H1 (cell line): ENCODE measurements at regions of chr17 and their contacts with region 1.

Region 1: DNA sequence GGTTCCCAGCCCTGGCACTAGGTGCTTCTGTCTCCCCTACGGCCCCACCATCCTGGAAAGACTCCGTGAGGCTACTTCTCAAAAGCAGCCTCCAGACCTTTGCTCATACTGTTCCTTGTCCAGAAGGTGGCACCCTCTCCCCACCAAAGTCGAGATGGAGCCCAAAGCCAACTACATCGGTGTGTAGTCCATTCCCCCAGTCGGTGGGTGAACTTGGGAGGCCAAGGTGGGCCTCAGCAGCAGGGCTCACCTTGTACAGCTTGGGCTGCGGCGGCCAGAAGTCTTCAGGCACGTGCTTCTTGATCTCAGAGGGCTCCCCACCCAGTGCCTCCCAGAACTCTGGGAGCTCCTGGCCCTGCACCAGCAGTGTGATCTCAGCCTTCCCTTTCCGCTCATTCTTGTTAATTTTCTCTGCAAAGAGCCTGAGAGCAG is 10.2 kb downstream of the FLII start:
- DNase-seq: peak in 1 of 2 experiments; percentile 76
- H3K4me3 ChIP-seq: no peak overlapping the region
- H3K27ac ChIP-seq: no peak overlapping the region
- H3K4me1 ChIP-seq: peaks cover 0 to 16% (median 9%) of the 10 kb centered on the region in 4 experiments; a peak in 6 of 7 replicates
- H3K27me3 ChIP-seq: no peaks in the 10 kb centered on the region
- CTCF ChIP-seq: peak; percentile 73 to 84 (median 73)
- EP300 ChIP-seq: no peak
- POLR2A ChIP-seq: no peak
- RAD21 ChIP-seq: peak; percentile 85 to 90

Region 2: DNA sequence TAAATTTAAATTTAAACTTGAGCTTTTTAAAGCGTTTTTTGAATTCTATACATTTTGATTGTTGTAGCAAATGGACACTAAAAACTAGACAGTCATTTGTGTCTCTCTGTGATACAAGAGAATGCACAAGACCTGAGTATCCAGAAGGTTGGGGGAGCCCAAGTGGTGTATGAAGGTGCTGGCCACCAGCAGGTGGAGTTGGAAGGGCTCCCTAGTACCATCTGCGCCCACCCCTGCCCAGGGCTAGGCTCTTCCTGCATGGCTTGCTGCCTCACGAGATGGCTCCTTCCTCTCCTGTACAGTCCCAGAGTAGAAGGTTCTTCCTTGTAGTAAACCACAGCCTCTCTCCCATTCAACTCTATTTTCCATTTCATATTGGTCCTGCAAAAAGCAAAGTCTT is 192.1 kb before region 1 on chr17:
- CTCF ChIA-PET with region 1: no interaction called
- POLR2A ChIA-PET with region 1: no interaction called
- DNase-seq: no peak
- H3K4me3 ChIP-seq: no peak overlapping the region
- H3K27ac ChIP-seq: no peak overlapping the region
- H3K4me1 ChIP-seq: no peaks in the 10 kb centered on the region
- H3K27me3 ChIP-seq: no peaks in the 10 kb centered on the region
- CTCF ChIP-seq: peak in 1 of 3 experiments; percentile 13; a peak in 1 of 4 replicates
- EP300 ChIP-seq: no peak
- POLR2A ChIP-seq: no peak
- RAD21 ChIP-seq: no peak

Region 3: GRCh38 chr17:18132711-18133110 is 115.6 kb before region 1 on chr17:
- CTCF ChIA-PET with region 1: no interaction called
- POLR2A ChIA-PET with region 1: no interaction called
- DNase-seq: no peak
- H3K4me3 ChIP-seq: no peak overlapping the region
- H3K27ac ChIP-seq: no peak overlapping the region
- H3K4me1 ChIP-seq: no peaks in the 10 kb centered on the region; a peak in 2 of 7 replicates
- H3K27me3 ChIP-seq: peaks cover 0 to 3% (median 2%) of the 10 kb centered on the region in 4 experiments; a peak in 4 of 7 replicates
- CTCF ChIP-seq: no peak
- EP300 ChIP-seq: no peak
- POLR2A ChIP-seq: no peak
- RAD21 ChIP-seq: no peak

Region 4: GRCh38 chr17:18194811-18195210 is 53.5 kb before region 1 on chr17:
- CTCF ChIA-PET with region 1: no interaction called
- POLR2A ChIA-PET with region 1: no interaction called
- DNase-seq: no peak
- H3K4me3 ChIP-seq: no peak overlapping the region
- H3K27ac ChIP-seq: no peak overlapping the region
- H3K4me1 ChIP-seq: no peaks in the 10 kb centered on the region
- H3K27me3 ChIP-seq: no peaks in the 10 kb centered on the region
- CTCF ChIP-seq: no peak
- EP300 ChIP-seq: no peak
- POLR2A ChIP-seq: no peak
- RAD21 ChIP-seq: no peak

Region 5: DNA sequence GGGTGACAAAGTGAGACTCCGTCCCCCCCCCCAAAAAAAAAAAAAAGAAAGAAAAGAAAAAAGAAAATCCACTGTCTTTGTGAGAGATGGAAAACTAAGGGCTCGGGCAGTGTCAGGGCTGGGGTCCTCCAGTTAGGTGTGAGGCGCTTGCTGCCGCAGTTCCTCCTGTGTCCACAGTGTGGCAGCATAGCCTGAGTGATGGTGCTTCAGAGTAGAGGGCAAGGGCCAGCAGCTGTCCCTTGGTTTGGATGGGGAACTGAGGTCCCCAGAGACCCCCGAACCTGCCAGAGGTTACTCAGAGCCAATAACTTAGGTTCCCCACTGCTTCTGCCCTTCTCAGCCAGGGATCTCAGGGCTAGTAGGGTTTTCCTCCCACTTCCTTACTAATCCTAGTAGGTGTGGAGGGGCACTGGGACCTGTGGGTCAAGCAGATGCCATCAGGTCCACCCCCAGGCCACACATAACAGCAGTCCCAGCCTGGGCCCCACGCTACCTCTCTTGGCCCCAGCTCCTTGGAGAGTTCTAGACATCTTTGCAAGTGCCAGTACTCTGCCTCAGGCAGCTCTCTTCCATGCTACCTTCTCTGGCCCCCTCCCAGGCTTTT is 30.8 kb before region 1 on chr17:
- CTCF ChIA-PET with region 1: interaction called, 25 read pairs
- POLR2A ChIA-PET with region 1: interaction called, 5 read pairs
- DNase-seq: peak in 1 of 2 experiments; percentile 96
- H3K4me3 ChIP-seq: no peak overlapping the region
- H3K27ac ChIP-seq: no peak overlapping the region
- H3K4me1 ChIP-seq: no peaks in the 10 kb centered on the region; a peak in 3 of 7 replicates
- H3K27me3 ChIP-seq: no peaks in the 10 kb centered on the region
- CTCF ChIP-seq: peak; percentile 92 to 99 (median 98)
- EP300 ChIP-seq: no peak
- POLR2A ChIP-seq: no peak
- RAD21 ChIP-seq: peak; percentile 94 to 95

Region 6: DNA sequence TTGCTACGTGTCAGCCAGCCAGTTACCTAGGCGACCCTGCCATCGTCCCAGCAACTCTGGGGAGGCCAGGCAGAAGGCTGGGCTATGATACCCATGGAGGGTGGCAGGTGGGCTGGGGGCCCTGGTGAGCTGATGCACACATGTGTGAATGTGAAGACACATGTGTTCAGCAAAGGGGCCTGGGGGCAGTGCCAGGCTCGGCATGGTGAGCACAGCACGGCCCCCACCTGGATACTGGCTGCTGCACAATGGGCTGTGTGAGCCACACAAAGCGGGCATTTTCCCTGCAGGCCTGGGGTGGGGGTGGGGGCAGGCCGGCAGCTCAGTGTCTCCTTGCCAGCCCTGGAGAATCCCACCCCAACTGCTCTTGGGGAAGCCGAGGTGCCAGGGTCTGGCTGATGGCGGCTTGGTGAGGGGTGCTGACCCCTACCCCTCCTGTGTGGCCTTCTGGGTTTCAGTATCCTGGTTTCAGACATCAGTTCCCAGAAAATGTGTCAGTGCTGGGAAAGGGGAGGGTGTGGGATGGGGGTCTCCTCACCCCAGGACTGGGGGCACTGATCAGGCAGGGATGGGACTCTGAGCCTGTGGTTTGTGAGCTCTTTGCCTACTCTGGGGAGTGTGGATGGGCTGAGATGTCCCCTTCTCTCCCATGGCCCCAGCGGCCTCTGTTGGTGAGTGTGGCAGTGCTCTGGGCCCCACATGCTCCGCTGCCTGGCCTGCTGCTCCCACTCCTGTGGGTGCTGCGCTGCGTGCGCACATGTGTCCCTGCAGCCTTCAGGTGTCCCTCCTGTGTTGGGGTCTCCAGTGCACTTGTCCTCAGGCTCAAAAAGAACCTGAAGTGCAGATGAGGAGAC is 17.8 kb before region 1 on chr17:
- CTCF ChIA-PET with region 1: interaction called, 5 read pairs
- POLR2A ChIA-PET with region 1: interaction called, 14 read pairs
- DNase-seq: no peak
- H3K4me3 ChIP-seq: no peak overlapping the region
- H3K27ac ChIP-seq: no peak overlapping the region
- H3K4me1 ChIP-seq: peaks cover 0 to 10% (median 6%) of the 10 kb centered on the region in 4 experiments; a peak in 4 of 7 replicates
- H3K27me3 ChIP-seq: no peaks in the 10 kb centered on the region
- CTCF ChIP-seq: no peak
- EP300 ChIP-seq: no peak
- POLR2A ChIP-seq: no peak
- RAD21 ChIP-seq: no peak

Region 7: DNA sequence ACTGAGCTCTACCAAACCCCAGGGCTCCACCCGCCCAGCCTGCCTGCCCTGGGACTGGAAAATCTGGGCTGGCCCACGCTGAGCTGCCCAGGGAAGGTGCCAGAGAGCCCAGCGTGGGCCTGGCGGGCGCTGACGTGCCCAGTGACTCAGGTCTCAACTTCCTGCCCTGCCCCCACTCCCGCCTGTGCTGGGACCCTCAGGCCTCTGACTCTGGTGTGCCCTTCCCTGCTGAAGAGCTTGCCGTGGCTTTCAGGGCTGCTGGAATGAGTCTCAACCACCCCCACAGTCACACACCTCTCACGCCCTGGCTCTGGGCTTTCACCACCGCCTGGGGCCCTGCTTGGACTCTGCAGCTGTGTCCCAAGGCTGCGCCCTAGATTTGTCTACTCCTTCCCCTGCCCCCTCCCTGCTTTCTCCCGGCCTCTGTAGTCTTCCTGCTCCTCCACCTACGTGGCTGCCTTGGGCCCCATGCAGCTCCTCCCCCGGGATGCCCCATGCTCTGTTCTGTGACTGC is 12.5 kb before region 1 on chr17:
- CTCF ChIA-PET with region 1: interaction called, 6 read pairs
- POLR2A ChIA-PET with region 1: interaction called, 11 read pairs
- DNase-seq: no peak
- H3K4me3 ChIP-seq: no peak overlapping the region
- H3K27ac ChIP-seq: no peak overlapping the region
- H3K4me1 ChIP-seq: peaks cover 0 to 4% (median 0%) of the 10 kb centered on the region in 4 experiments; a peak in 1 of 7 replicates
- H3K27me3 ChIP-seq: peaks cover 0 to 2% (median 0%) of the 10 kb centered on the region in 4 experiments; a peak in 1 of 7 replicates
- CTCF ChIP-seq: no peak
- EP300 ChIP-seq: no peak
- POLR2A ChIP-seq: no peak
- RAD21 ChIP-seq: no peak

Region 8: GRCh38 chr17:18260332-18261144 is 12.2 kb after region 1 on chr17 and contains the start of gene MIEF2:
- CTCF ChIA-PET with region 1: interaction called, 30 read pairs
- POLR2A ChIA-PET with region 1: interaction called, 171 read pairs
- DNase-seq: peak; percentile 91 to 94
- H3K4me3 ChIP-seq: peak within 1 kb of the TSS; percentile 76 to 88 (median 84)
- H3K27ac ChIP-seq: peak within 1 kb of the TSS; percentile 90; the same call in 1 of the 2 replicates
- H3K4me1 ChIP-seq: peaks cover 4 to 37% (median 20%) of the 10 kb centered on the region in 4 experiments
- H3K27me3 ChIP-seq: no peaks in the 10 kb centered on the region
- CTCF ChIP-seq: no peak
- EP300 ChIP-seq: peak in 1 of 2 experiments; percentile 23; a peak in 1 of 3 replicates
- POLR2A ChIP-seq: peak in 1 of 2 experiments; percentile 91; a peak in 2 of 3 replicates
- RAD21 ChIP-seq: no peak
- total RNA-seq, gene MIEF2: 9.9 and 12.4 TPM in 2 replicates

Region 9: DNA sequence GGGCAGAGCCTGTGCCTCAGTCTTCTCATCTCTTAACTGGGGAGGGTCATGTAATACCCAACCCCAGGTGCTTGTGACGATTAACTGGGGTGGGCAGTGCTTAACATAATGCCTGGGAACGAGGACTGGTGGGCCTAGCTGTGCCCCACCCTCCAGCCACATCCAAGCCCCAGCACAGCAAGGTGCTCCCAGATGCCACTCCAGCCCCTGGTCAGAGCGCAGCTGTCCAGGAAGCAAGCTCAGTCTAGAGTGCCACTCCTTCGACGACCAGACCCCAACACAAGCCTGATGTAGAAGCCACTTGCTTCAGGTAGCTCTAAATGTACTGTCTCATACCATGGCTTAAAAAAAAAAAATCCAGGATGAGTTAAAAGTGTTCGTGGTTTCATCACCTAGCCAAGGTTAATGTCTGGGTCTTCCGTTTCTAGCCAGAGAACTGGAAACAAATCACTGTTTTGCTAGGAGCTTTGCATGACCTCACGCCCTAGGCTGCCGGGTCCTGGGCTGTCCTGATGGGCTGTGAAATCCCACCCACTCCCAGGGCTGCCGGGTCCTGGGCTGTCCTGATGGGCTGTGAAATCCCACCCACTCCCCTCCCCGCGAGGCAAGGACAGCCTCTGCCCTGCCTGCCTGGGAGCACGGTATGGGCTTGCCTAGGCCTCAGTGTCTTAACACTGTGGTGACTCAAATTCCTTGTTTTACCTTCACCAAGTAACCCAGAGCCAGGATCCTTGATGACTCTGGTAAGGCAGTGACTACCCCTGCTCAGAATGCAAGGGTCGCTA is 19.8 kb after region 1 on chr17:
- CTCF ChIA-PET with region 1: interaction called, 30 read pairs
- POLR2A ChIA-PET with region 1: interaction called, 171 read pairs
- DNase-seq: no peak
- H3K4me3 ChIP-seq: no peak overlapping the region
- H3K27ac ChIP-seq: no peak overlapping the region
- H3K4me1 ChIP-seq: peaks cover 0 to 10% (median 2%) of the 10 kb centered on the region in 4 experiments; a peak in 4 of 7 replicates
- H3K27me3 ChIP-seq: no peaks in the 10 kb centered on the region
- CTCF ChIP-seq: no peak
- EP300 ChIP-seq: no peak
- POLR2A ChIP-seq: no peak; a peak in 1 of 3 replicates
- RAD21 ChIP-seq: no peak

Region 10: DNA sequence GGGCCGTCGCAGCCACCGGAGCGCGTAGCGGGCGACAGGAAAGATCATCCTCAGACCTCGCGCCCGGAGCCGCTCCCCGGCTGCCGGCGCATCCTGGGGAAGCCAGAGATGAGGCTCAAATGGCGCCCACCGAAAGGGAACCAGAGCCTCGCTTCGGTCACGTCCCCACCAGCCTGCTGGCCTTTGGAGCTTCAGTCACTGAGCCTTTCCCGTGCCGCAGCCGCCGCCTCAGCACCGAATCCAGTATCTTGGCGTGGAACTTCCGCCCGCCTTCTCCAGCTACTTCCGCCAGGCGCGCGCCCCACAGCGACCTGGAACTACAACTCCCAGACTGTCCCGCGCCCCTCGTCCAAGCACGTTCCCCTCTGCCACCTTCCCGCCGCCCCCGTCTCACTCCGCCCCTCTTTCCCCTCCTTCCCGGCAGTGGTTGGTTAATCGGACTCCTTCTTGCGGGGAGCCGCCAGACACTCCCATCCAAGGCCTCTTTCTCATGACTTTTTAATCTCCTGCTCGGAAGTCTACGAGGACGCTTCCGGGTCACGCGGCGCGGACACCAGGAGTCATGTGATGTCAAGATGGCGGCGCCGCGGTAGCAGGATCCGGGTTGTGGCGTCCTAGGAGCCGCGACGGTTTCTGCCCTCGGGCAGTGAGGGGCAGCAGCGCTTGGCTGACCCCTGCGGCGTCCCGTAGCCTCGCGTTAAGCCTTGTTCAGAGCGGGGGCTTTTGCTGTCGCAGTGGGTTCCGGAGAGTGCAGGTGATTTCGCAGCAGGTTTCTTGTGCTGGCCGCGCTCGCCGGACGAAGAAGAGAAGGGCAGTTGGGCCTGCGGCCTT is 66.6 kb after region 1 on chr17 and contains the starts of genes SMCR8 and TOP3A:
- CTCF ChIA-PET with region 1: interaction called, 19 read pairs
- POLR2A ChIA-PET with region 1: interaction called, 9 read pairs
- DNase-seq: peak; percentile 85 to 93
- H3K4me3 ChIP-seq: peak within 1 kb of the TSS; percentile 83 to 92 (median 86)
- H3K27ac ChIP-seq: peak within 1 kb of the TSS; percentile 84
- H3K4me1 ChIP-seq: peaks cover 0 to 12% (median 4%) of the 10 kb centered on the region in 4 experiments; a peak in 5 of 7 replicates
- H3K27me3 ChIP-seq: no peaks in the 10 kb centered on the region
- CTCF ChIP-seq: no peak
- EP300 ChIP-seq: peak in 1 of 2 experiments; percentile 61; a peak in 1 of 3 replicates
- POLR2A ChIP-seq: peak; percentile 50 to 62
- RAD21 ChIP-seq: no peak; a peak in 1 of 4 replicates
- total RNA-seq, gene SMCR8: 18.5 and 19.0 TPM in 2 replicates
- total RNA-seq, gene TOP3A: 46.2 and 54.3 TPM in 2 replicates